SK-N-SH (cell line): ENCODE measurements at regions of chr12 and their contacts with region 1.

Region 1: DNA sequence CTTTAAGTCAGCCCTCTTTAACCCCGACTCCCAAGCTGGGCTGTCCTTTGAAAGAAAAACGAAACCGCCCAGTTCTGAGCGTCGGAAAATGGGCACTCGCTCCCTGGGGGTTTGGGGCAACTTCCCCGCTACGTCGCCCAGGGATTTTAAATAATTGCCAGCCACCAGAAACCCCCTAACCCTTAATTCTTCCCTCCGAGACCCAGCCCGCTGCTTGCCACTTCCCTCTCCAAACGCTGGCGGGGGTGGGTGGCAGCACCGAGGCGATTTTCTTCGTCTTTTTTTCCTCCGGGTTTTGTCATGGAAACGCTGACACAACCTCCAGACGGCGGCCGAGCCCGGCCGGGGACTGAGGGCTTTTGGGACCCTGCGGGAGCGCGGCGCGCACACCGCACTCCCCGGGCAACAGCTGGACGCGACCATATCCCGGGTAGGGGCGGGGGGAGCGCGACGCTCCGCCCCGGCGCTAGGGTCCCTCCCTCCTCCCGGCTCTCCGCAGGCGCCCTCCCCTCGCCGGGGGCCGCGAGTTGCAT is at the start of gene CHST11:
- DNase-seq: peak; percentile 98
- H3K4me3 ChIP-seq: peak within 1 kb of the TSS; percentile 92 to 100
- H3K27ac ChIP-seq: peak within 1 kb of the TSS; percentile 55 to 79
- H3K4me1 ChIP-seq: peaks cover 5 to 15% of the 10 kb centered on the region in 2 experiments; a peak in 1 of 4 replicates
- H3K27me3 ChIP-seq: no peaks in the 10 kb centered on the region
- CTCF ChIP-seq: peak; percentile 41
- EP300 ChIP-seq: peak in 1 of 2 experiments; percentile 5; a peak in 1 of 4 replicates
- RAD21 ChIP-seq: no peak
- polyA plus RNA-seq, gene CHST11: 12.7 and 18.6 TPM in 2 replicates

Region 2: DNA sequence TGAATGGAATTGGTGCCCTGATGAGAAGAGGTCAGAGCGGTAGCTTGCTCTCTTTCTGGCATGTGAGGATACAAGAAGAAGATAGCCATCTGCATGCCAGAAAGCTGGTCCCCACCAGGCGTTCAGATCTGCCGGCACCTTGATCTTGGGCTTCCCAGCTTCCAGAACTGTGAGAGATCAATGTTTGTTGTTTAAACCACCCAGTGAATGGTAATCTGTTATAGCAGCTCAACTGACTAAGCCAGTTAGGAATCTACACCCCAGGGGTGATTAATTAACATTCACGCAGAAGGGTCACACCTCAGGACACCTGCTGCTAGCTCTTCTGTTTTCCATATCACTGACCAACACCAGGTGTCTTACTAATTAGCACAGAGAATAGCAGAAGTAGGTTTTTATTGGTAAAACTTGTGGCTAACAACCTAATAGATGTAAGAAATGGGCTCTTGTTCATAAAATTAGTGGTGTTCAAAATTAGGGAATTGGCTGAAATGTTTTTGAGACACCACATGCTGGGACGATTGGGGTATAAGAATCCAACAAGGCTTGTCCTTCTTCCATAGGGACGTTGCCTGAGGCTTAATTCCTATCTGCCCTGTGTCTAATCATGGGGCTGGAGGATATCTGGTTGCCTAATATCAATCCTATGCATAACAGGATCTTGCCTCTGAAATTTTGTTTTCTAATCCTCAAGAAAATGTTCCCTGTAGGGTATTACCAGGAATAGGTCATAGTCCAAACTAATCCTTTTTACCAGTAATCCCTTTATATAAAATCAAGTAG is 41.8 kb before region 1 on chr12:
- CTCF ChIA-PET with region 1: no interaction called
- POLR2A ChIA-PET with region 1: no interaction called
- DNase-seq: no peak
- H3K4me3 ChIP-seq: no peak overlapping the region
- H3K27ac ChIP-seq: no peak overlapping the region
- H3K4me1 ChIP-seq: no peaks in the 10 kb centered on the region
- H3K27me3 ChIP-seq: no peaks in the 10 kb centered on the region
- CTCF ChIP-seq: no peak
- EP300 ChIP-seq: no peak
- RAD21 ChIP-seq: no peak

Region 3: DNA sequence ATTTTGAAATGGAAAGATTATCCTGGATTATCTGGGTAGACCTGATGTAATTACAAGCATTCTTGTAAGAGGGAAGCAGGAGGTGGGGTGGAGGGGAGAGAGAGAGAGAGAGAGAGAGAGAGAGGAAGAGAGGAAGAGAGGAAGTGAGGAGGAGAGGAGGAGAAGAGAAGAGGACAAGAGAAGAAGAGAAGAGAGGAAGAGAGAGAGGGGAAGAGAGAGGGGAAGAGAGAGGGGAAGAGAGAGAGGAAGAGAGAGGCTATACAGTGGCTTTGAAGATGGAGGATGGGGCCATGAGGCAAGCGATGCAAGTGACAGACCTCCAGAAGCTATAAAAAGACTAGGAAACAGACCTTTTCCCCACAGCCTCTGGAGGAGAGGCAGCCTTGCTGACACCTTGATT is 13.5 kb before region 1 on chr12:
- CTCF ChIA-PET with region 1: interaction called, 13 read pairs
- POLR2A ChIA-PET with region 1: no interaction called
- DNase-seq: no peak
- H3K4me3 ChIP-seq: no peak overlapping the region
- H3K27ac ChIP-seq: no peak overlapping the region
- H3K4me1 ChIP-seq: no peaks in the 10 kb centered on the region
- H3K27me3 ChIP-seq: no peaks in the 10 kb centered on the region; the same call in 1 of the 2 replicates
- CTCF ChIP-seq: no peak
- EP300 ChIP-seq: no peak
- RAD21 ChIP-seq: no peak

Region 4: DNA sequence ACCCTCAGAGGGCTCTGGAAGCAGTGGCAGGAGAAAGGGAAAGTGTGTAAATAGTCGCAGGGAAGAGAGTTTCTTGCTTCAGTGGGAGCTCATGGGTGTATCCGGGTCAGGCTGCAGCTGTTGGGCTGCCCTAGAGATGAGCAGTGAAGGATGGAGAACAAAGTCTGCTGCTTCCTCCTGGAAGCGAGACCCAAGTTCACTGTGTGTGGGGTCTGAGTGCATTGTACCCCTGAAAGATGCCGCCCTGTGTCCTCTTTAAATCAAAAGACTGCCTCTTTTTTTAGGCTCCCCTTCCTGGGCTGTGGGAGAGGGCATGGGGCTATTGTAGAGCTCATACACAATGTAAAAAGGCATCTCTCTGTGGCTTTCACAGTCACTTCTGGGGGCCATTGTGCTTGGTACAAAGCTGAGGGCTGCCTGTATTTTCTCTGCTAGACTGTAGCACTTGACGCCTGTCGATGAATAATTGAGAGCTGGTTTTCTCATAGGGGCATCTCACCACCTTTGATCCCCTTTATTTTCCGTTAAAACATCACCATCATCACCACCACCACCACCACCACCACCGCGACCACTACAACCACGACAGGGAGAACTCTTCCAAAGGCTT is 17.0 kb after region 1 on chr12:
- CTCF ChIA-PET with region 1: interaction called, 10 read pairs
- POLR2A ChIA-PET with region 1: no interaction called
- DNase-seq: no peak
- H3K4me3 ChIP-seq: no peak overlapping the region
- H3K27ac ChIP-seq: no peak overlapping the region
- H3K4me1 ChIP-seq: no peaks in the 10 kb centered on the region; a peak in 1 of 4 replicates
- H3K27me3 ChIP-seq: no peaks in the 10 kb centered on the region
- CTCF ChIP-seq: no peak
- EP300 ChIP-seq: no peak
- RAD21 ChIP-seq: no peak

Region 5: DNA sequence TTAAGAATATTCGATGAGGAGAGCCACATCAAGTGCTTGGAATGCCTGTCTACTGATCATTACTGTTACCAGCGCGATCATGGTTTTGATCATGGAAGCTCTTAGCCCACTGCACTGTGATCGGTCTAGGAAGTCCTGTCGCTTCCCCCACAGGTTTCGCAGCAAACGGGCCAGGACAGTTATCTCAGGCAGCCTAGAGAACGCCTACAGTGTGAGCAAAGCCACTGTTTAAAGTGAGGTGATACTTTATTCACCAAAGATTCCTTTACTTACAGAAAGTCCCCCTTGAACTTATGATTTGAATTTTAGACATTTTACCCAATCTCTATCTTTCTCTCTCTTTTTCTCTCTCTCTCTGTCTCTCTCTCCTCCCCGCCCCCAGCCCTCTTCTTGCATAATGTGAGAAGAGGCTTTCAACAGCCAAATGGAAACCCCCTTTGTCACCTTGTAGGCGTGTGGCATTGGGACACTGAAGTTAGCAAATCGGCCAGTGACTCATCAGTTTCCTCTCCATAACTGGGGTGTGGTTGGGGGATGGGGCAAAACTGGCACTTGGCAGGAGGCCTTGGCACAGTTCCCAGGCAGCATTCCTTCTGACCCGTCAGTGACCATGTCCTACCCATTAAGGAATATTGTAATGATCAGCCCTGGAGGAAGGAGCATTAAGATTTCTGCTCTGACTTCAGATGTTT is 215.1 kb after region 1 on chr12:
- CTCF ChIA-PET with region 1: interaction called, 17 read pairs
- POLR2A ChIA-PET with region 1: no interaction called
- DNase-seq: peak; percentile 40
- H3K4me3 ChIP-seq: peak overlapping the region in 1 of 2 experiments; percentile 29; a peak in 1 of 4 replicates
- H3K27ac ChIP-seq: peak overlapping the region in 1 of 2 experiments; percentile 66; a peak in 3 of 4 replicates
- H3K4me1 ChIP-seq: peaks cover 25 to 62% of the 10 kb centered on the region in 2 experiments
- H3K27me3 ChIP-seq: no peaks in the 10 kb centered on the region
- CTCF ChIP-seq: no peak
- EP300 ChIP-seq: peak; percentile 32 to 91; a peak in 2 of 4 replicates
- RAD21 ChIP-seq: 0 out of 2 replicates have a peak, but pooled peaks have one; percentile 12